ENCODE measurements at regions of chr18 and their contacts with region 1.

Region 1: DNA sequence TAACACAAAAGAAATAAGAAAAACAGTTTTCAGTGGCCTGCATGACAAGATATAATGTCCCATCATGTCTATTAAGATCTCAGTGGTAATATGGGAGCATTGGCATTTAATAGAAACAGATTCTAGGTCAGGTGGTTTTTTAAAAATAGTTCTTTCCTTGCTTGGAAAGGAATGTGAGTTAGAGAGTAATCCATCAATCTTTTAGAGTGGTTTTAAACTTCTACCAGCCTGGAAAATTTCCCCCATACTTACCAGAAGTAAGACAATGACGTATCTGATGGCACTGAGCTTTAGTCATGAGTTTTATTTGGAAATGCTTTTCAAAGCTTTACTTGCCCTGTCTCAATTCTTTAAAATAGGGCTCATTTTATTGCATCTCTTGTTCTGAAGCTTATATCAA is 441.7 kb upstream of the SMIM21 start:
- DNase-seq: no peak
- ATAC-seq: no peak
- H3K4me3 ChIP-seq: no peak overlapping the region
- H3K27ac ChIP-seq: peak overlapping the region in 1 of 2 donors; percentile 43
- H3K4me1 ChIP-seq: no peaks in the 10 kb centered on the region
- H3K27me3 ChIP-seq: no peaks in the 10 kb centered on the region

Region 2: DNA sequence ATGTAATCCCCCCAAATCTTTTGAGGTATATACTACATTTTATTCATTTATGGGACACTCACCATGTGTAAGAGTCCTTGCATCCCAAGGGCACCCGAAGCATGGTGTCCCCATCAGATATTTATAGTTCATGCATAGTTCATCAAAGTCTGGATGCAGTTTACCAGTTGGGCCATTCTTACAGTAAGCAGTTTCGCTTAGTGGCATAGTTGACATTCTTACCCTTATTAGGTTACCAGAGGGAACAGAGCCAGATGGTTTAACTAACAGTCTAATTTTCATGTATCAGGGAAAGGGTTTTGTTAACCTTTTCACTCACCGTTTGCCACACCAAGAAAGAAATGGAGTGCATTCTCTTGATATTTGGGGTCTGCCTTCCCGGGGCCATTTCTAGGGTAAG is 1264.4 kb before region 1 on chr18:
- intact Hi-C with region 1: loop called in 1 of 2 experiments (anchors 10 kb)
- DNase-seq: no peak
- ATAC-seq: no peak
- H3K4me3 ChIP-seq: no peak overlapping the region
- H3K27ac ChIP-seq: no peak overlapping the region
- H3K4me1 ChIP-seq: no peaks in the 10 kb centered on the region
- H3K27me3 ChIP-seq: no peaks in the 10 kb centered on the region

Region 3: DNA sequence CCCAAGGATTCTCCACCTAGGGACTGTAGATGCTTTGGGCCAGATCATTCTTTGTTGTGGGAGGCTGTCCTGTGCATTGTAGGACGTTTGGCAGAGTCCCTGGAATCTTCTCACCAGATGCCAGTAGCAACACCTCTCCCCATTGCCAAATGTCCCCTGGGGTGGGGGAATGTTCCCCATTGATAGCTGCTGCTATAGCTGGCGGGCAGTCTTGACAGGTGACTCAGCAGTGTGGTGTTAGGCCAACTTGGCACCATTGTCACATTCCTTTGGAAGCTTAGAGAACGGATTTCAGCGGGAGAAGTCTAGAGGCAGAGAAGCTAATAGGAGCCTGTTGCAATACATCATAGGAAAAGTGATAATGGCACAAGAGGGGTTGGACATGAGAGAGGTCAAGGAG is 54.0 kb after region 1 on chr18:
- intact Hi-C with region 1: loop called in 1 of 2 experiments (anchors 2 kb)
- DNase-seq: peak; percentile 81 to 88
- ATAC-seq: peak; percentile 80
- H3K4me3 ChIP-seq: no peak overlapping the region
- H3K27ac ChIP-seq: no peak overlapping the region
- H3K4me1 ChIP-seq: no peaks in the 10 kb centered on the region
- H3K27me3 ChIP-seq: no peaks in the 10 kb centered on the region

Measured in aorta (tissue), 5 donors.